Esophagus muscularis mucosa (tissue), 4 donors: ENCODE measurements at regions of chr10 and their contacts with region 1.

Region 1: GRCh38 chr10:68792115-68792514 is 35.2 kb upstream of the STOX1 start:
- DNase-seq: no peak
- H3K4me3 ChIP-seq: no peak overlapping the region
- H3K27ac ChIP-seq: no peak overlapping the region
- H3K4me1 ChIP-seq: no peaks in the 10 kb centered on the region
- H3K27me3 ChIP-seq: no peaks in the 10 kb centered on the region
- CTCF ChIP-seq: peak in 1 of 3 experiments; percentile 18
- EP300 ChIP-seq: no peak
- POLR2A ChIP-seq: no peak

Region 2: DNA sequence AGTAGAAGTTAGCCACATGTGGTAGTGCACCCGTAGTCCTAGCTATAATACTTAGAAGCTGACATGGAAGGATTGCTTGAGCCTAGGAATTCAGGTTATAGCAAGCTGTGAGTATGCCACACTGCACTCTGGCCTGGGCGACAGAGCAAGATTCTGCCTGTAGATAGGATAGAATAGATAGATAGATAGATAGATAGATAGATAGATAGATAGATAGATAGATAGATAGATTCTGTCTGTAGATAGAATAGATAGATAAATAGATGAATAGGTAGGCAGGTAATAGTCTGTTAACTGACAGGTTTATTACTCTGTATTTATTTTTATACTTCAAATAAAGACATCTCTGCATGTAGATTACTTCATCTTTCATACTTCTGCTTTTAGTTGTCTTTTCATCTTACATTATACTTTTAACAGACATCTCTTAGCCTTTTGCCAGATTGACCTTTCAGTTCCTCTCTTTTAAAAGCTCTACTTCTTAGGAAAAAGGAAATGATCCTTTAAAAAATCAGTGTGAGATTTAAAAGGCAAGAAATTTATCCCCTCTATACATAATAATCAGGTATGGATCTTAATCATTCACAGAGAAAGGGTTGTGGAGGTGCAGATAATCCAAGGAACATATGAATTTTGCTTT is 39.3 kb before region 1 on chr10:
- intact Hi-C with region 1: loop called (anchors 5 kb)
- DNase-seq: no peak
- H3K4me3 ChIP-seq: no peak overlapping the region
- H3K27ac ChIP-seq: no peak overlapping the region
- H3K4me1 ChIP-seq: no peaks in the 10 kb centered on the region
- H3K27me3 ChIP-seq: no peaks in the 10 kb centered on the region
- CTCF ChIP-seq: no peak
- EP300 ChIP-seq: no peak
- POLR2A ChIP-seq: no peak